A549 (cell line): ENCODE measurements at regions of chr17 and their contacts with region 1.

Region 1: GRCh38 chr17:4908301-4908700 is 5.4 kb upstream of the CHRNE start:
- DNase-seq: no peak
- ATAC-seq: no peak
- H3K4me3 ChIP-seq: no peak overlapping the region
- H3K27ac ChIP-seq: no peak overlapping the region
- H3K4me1 ChIP-seq: peaks cover 9% of the 10 kb centered on the region; the same call in 1 of the 3 replicates
- CTCF ChIP-seq: no peak
- EP300 ChIP-seq: no peak
- POLR2A ChIP-seq: no peak
- RAD21 ChIP-seq: no peak

Region 2: GRCh38 chr17:4920351-4921048 is 12.2 kb after region 1 on chr17:
- CTCF ChIA-PET with region 1: interaction called, 37 read pairs
- POLR2A ChIA-PET with region 1: interaction called, 4 read pairs
- DNase-seq: no peak
- ATAC-seq: peak; percentile 40 to 54; a peak in 4 of 6 replicates
- H3K4me3 ChIP-seq: no peak overlapping the region
- H3K27ac ChIP-seq: no peak overlapping the region
- H3K4me1 ChIP-seq: 0 out of 3 replicates have a peak, but pooled peaks cover 4% of the 10 kb centered on the region
- CTCF ChIP-seq: no peak
- EP300 ChIP-seq: no peak
- POLR2A ChIP-seq: no peak
- RAD21 ChIP-seq: no peak

Region 3: DNA sequence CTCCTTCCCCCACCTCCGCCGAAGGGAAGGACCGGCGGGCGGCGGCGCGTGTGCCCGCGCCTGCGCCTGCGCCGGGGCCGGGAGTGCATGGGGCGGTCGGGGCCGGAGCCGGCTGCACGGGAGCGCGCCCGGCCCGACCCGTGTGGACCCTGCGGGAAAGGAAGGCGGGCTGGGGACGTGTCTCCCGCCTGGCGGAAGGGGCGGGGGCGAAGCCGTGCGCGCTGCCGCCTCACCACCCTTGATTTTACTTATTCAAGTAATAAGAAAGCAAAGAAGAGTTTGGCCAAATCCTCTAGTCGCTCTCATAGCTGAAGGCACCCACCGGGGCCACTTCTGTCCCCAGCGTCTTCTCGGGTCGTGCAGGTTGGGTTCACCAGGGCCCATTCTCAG is 40.6 kb after region 1 on chr17:
- CTCF ChIA-PET with region 1: interaction called, 12 read pairs
- POLR2A ChIA-PET with region 1: no interaction called
- DNase-seq: peak; percentile 95 to 98
- ATAC-seq: peak; percentile 47 to 69
- H3K4me3 ChIP-seq: peak overlapping the region; percentile 98
- H3K27ac ChIP-seq: peak overlapping the region; percentile 99
- H3K4me1 ChIP-seq: peaks cover 54% of the 10 kb centered on the region
- CTCF ChIP-seq: no peak
- EP300 ChIP-seq: no peak
- POLR2A ChIP-seq: peak; percentile 64
- RAD21 ChIP-seq: no peak

Region 4: DNA sequence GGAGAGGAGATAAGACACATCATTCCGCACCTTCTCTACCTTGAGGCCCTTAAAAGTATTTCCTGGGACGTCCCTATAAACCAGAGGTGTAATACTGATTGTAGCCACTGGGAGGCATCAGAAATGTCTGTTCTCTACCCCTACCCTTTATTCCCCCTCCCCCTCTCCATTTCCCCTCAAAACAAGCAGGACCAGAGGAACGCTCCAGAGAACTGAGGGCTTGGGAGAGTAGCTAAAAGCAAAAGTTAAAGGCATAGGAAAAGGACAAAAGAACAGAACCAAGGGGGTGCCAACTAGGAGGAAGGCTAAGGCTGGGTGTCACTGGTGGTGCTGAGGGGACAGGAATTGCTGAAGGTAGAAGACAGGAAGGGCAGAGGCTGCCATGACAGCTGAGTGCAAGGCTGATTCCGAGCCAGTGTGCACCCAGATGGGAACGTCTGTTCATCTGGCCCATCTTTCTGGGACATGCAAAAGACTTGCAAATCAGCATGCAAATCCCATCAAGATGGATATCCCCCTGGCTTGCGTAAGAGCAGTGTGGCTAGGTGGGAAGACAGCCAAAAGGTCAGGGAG is 72.4 kb after region 1 on chr17:
- CTCF ChIA-PET with region 1: interaction called, 11 read pairs
- POLR2A ChIA-PET with region 1: no interaction called
- DNase-seq: peak; percentile 65 to 73
- ATAC-seq: peak; percentile 78 to 84
- H3K4me3 ChIP-seq: no peak overlapping the region
- H3K27ac ChIP-seq: no peak overlapping the region
- H3K4me1 ChIP-seq: peaks cover 2% of the 10 kb centered on the region; the same call in 2 of the 3 replicates
- CTCF ChIP-seq: peak; percentile 73
- EP300 ChIP-seq: no peak
- POLR2A ChIP-seq: no peak
- RAD21 ChIP-seq: peak; percentile 55 to 63